Activated CD4-positive, alpha-beta memory T cell treated with anti-CD3 and anti-CD28 coated beads for 36 hours (primary cell): ENCODE measurements at regions of chr12 and their contacts with region 1.

Region 1: DNA sequence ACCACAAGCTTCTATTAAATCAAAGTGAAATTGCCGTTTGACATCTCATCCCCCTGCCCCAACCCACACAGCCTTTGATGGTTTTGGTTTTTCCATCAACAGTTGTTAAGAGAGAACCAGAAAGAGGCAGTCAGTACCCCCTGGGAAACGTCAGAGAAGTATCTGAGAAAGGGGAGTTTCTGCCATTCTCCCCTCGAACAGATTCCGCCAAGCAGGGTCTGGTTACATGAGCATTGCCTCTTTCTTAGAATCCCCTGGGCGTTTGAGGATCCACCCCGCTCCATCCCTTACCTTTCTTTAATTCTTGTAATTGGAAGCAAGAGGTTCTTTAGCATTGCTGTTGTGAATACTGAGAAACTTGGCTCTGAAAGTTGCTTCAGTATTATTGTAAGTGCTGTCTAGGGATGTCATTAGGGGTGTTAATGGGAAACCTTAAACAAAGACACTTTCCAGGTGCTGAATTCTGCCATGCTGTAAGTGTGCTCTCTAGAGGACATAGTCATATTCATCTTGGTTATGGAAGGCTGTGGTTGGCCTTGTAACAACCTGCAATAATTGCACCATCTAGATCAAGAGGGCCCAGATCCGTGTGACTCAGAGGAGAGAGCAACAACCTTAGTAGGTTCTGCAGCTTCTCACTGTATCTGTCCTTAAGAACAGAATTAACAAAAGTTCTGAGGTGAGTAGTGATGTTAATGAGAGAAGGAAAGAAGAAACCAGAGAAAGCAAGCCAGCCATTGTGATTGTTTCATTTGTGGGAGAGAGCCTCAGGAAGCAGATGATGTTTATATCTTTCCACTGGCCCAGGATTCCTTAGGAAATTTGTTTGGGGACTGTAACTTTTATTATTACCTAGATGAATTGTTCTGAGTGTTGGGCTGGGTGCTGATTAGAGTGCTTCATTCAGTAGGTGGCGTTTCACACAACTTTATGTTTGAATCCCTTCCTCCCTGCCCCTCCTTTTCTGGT is 9.0 kb downstream of the TMBIM6 start:
- DNase-seq: peak; percentile 77
- H3K4me3 Mint-ChIP-seq: peak overlapping the region; percentile 54
- H3K27ac Mint-ChIP-seq: peak overlapping the region; percentile 92
- H3K4me1 Mint-ChIP-seq: peaks cover 86% of the 10 kb centered on the region
- H3K27me3 Mint-ChIP-seq: no peaks in the 10 kb centered on the region

Region 2: GRCh38 chr12:49698619-49699545 is 51.4 kb before region 1 on chr12:
- CTCF ChIA-PET with region 1: no interaction called
- POLR2A ChIA-PET with region 1: no interaction called
- intact Hi-C with region 1: loop called (anchors 1 kb)
- DNase-seq: peak; percentile 69
- H3K4me3 Mint-ChIP-seq: peak overlapping the region; percentile 58
- H3K27ac Mint-ChIP-seq: peak overlapping the region; percentile 77
- H3K4me1 Mint-ChIP-seq: peaks cover 41% of the 10 kb centered on the region
- H3K27me3 Mint-ChIP-seq: no peaks in the 10 kb centered on the region

Region 3: DNA sequence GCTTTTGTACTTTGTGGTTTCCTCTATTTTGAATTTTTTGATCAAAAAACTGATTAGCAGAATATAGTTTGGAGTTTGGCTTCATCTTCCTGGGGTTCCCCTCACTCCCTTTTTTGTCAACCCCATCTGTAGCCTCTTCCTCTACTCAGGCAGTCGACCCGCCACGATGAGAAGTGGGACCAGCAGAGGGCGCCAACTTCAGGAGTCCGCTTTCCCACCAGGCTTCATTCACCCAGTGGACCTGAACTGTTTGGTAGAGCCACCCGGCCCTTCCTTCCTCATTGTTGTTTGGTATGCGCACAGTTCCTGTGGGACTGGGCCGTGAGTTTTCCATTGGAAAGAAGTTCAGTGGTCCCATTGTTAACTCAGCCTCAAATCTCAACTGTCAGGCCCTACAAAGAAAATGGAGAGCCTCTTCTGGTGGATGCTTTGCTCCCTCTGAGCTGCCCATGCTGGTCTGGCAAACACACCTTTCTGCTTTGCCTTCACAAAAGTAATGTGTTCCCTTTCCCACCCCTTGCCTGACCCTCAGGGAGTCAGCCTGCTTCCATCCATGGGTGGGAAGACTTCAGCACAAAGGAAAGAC is 12.8 kb after region 1 on chr12:
- CTCF ChIA-PET with region 1: interaction called, 74 read pairs
- POLR2A ChIA-PET with region 1: interaction called, 13 read pairs
- intact Hi-C with region 1: loop called (anchors 1 kb)
- DNase-seq: peak; percentile 89
- H3K4me3 Mint-ChIP-seq: peak overlapping the region; percentile 49
- H3K27ac Mint-ChIP-seq: peak overlapping the region; percentile 95
- H3K4me1 Mint-ChIP-seq: peaks cover 59% of the 10 kb centered on the region
- H3K27me3 Mint-ChIP-seq: no peaks in the 10 kb centered on the region

Region 4: GRCh38 chr12:50533203-50533584 is 782.9 kb after region 1 on chr12:
- CTCF ChIA-PET with region 1: no interaction called
- POLR2A ChIA-PET with region 1: no interaction called
- intact Hi-C with region 1: loop called (anchors 5 kb)
- DNase-seq: no peak
- H3K4me3 Mint-ChIP-seq: no peak overlapping the region
- H3K27ac Mint-ChIP-seq: no peak overlapping the region
- H3K4me1 Mint-ChIP-seq: peaks cover 38% of the 10 kb centered on the region
- H3K27me3 Mint-ChIP-seq: no peaks in the 10 kb centered on the region

Region 5: DNA sequence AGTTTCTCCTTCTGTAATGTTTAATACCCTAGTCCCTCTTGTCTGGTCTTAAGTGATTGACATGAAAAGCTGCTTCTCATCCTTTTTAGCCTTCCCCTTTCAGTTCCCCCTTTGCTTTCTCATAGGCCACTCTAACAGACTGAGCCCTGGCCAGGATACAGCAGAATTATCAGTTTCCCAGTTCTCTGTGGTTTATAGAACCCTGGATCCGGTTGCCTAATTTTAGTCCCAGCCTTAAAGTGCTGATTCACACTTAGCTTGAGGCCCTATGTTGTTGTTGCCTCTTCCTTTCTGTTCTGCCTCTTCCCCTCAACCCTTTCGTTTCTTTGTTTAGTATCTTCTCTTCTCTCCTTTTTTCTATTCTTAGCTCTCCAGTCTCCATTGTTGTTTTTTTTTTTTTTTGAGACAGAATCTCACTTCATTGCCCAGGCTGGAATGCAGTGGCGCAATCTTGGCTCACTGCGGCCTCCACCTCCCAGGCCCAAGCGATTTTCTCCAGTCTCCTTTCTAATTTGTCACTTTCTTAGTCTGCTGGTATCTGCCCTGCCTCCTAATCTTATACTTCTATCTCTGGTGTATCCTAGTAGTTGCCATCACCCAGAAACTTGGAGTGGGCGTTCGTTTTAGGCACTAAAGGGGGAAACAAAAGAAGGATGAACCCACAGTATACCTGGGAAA is 1576.6 kb after region 1 on chr12:
- CTCF ChIA-PET with region 1: no interaction called
- POLR2A ChIA-PET with region 1: no interaction called
- intact Hi-C with region 1: loop called (anchors 5 kb)
- DNase-seq: no peak
- H3K4me3 Mint-ChIP-seq: peak overlapping the region; percentile 52
- H3K27ac Mint-ChIP-seq: peak overlapping the region; percentile 90
- H3K4me1 Mint-ChIP-seq: peaks cover 64% of the 10 kb centered on the region
- H3K27me3 Mint-ChIP-seq: no peaks in the 10 kb centered on the region